Pancreas (tissue), 10 donors: ENCODE measurements at regions of chr1 and their contacts with region 1.

Region 1: DNA sequence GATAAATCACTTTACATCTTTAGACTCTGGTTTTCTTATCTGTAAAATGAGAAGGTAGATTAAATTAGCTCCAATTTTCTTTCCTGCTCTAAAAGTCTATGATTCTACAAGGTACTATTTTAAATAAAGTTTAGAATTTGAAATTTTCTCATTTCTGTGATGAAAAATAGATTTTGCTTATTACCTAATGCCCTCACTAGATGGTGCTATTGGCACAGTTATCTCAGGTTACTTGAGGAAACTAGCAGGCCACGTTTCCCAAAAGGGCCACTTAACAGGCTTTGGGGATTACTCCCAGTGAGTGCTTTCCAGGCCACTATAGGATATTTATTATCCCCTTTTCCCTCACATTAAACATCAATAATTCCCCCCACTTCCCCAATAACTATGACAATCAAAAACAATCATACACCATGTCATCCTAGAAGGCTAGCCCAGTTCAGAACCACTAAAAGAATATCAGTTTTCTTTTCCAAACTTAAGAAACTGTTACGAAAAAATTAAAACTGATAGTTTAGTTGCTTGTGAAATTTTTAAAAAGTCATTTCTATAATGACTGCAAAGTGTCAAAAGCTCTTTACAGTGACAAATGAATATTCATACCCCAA is 30.6 kb downstream of the OMA1 start:
- DNase-seq: peak in 3 of 6 donors; percentile 13 to 37 (median 29)
- ATAC-seq: peak; percentile 56 to 94 (median 91)
- H3K4me3 ChIP-seq: no peak overlapping the region
- H3K27ac ChIP-seq: no peak overlapping the region
- H3K4me1 ChIP-seq: no peaks in the 10 kb centered on the region
- H3K27me3 ChIP-seq: no peaks in the 10 kb centered on the region
- CTCF ChIP-seq: peak in 3 of 4 donors; percentile 25 to 54 (median 43)

Region 2: DNA sequence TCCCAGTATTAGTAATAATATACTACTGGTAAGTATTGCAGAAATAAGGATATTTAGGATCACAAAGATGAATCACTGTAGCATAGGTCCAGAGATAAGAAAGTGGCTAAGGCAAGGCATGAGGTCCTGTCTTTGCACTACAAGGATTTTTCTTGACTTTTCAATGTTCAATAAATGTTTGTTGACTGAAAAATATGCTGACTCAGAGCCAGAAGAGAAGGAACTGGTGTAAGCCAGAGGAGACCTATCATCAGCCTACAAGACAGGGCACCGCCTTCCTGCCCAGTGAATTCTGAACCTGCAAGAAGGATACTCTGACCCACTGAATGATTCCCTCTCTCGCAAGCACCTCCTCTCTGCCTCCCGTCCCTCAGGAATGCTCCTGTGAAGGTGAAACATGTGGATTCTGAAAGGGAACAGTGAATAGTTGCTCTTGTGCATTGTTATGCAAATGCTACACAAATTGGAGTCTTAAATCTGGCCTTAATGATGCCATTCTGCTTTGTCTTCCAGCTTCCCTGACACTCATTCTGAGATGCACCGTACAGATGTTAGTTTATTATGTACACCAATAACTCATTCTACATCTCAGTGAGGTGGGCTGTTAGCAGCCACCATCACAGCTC is 509.4 kb before region 1 on chr1:
- intact Hi-C with region 1: no loop called
- DNase-seq: no peak
- ATAC-seq: no peak
- H3K4me3 ChIP-seq: no peak overlapping the region
- H3K27ac ChIP-seq: no peak overlapping the region
- H3K4me1 ChIP-seq: no peaks in the 10 kb centered on the region
- H3K27me3 ChIP-seq: no peaks in the 10 kb centered on the region
- CTCF ChIP-seq: no peak

Region 3: DNA sequence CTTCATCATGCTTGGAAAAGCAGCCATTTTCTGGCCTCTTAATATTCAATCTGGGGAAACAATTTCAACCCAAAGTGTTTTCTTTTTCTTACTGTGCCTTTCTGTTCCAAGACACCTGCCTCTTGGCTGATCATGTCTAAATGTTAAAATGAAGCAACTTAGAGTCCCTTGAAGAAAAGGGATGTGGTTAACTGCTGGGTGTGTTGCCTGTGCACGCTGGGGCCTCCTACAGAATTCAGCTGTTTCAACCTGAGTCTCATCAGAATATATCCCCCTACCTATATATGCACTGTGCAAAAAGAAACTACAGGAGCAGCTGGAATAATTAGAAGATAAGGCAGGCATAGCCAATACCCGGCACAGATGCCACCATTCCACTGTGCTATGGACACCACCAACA is 191.3 kb before region 1 on chr1:
- intact Hi-C with region 1: no loop called
- DNase-seq: no peak
- ATAC-seq: no peak
- H3K4me3 ChIP-seq: no peak overlapping the region
- H3K27ac ChIP-seq: no peak overlapping the region
- H3K4me1 ChIP-seq: no peaks in the 10 kb centered on the region
- H3K27me3 ChIP-seq: no peaks in the 10 kb centered on the region
- CTCF ChIP-seq: no peak

Region 4: DNA sequence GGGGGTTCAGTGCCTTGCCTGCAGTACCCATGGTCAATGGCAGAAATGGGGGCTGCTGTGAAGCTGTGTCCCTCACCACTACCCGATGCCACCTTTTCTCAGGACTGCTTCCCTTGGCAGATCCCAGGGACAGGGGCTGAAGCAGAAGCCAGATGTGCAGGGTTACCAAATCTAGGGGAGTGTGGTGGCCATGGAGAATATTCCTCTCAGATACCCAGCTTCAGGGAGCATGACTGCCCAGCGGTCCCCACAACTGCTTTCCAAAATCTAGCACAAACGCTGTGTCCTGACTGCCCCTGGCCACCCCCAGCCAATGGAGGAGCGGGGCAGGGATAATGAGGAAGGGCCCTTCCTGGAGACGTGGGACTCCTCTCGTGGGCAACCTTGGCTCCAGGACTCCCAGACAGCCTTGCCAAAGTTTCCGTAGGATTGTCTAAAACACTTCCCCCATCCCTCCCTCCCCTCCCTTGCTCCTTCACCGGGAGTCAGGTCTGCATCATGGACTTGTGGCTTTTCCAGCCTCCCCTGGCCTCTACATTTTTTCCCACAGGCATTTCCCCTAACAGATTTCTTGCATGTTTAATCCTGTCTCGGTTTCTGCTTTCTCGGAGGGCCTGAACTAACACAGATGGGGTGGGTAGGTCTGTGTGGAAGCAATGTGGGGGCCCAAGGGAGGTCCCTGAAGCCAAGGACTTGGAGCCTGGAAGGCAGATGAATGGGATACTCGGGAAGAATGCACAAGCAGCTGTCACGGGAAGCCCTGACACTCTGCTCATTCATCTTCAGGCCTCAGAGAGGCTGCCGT is 49.9 kb before region 1 on chr1:
- intact Hi-C with region 1: no loop called
- DNase-seq: no peak
- ATAC-seq: no peak
- H3K4me3 ChIP-seq: no peak overlapping the region
- H3K27ac ChIP-seq: no peak overlapping the region
- H3K4me1 ChIP-seq: no peaks in the 10 kb centered on the region
- H3K27me3 ChIP-seq: no peaks in the 10 kb centered on the region
- CTCF ChIP-seq: no peak

Region 5: DNA sequence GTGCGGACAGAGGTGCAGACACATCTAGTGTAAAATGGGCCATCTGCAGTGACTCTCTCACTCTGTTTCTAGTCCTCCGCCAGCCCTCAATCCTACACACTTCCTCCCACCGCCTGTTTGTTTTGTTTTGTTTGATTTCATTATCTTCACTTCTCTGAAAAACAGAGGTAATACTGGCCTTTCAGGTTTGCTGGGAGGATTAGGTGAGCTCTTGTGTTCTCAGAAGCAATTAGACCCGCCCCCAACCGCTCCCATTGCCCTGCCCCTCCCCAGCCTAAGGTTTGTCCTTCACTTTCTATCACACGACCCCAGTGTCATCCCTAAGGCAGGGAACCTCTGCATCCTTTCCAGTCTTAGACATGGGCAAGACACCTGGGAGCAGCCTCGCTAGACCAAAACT is 104.4 kb after region 1 on chr1:
- intact Hi-C with region 1: no loop called
- DNase-seq: peak in 5 of 6 donors; percentile 36 to 79 (median 62)
- ATAC-seq: peak; percentile 81 to 89 (median 84)
- H3K4me3 ChIP-seq: no peak overlapping the region
- H3K27ac ChIP-seq: peak overlapping the region; percentile 18 to 81 (median 58)
- H3K4me1 ChIP-seq: peaks cover 16 to 32% (median 20%) of the 10 kb centered on the region in 3 donors
- H3K27me3 ChIP-seq: no peaks in the 10 kb centered on the region
- CTCF ChIP-seq: no peak

Region 6: GRCh38 chr1:58652651-58653184 is 136.8 kb after region 1 on chr1:
- intact Hi-C with region 1: loop called in 2 of 3 experiments (anchors 2 to 5 kb)
- DNase-seq: peak in 4 of 6 donors; percentile 31 to 67 (median 56)
- ATAC-seq: peak; percentile 83 to 99 (median 94)
- H3K4me3 ChIP-seq: no peak overlapping the region
- H3K27ac ChIP-seq: no peak overlapping the region
- H3K4me1 ChIP-seq: peaks cover 0 to 3% (median 0%) of the 10 kb centered on the region in 3 donors
- H3K27me3 ChIP-seq: no peaks in the 10 kb centered on the region
- CTCF ChIP-seq: peak; percentile 72 to 74 (median 74)

Region 7: GRCh38 chr1:58755468-58755872 is 239.6 kb after region 1 on chr1:
- intact Hi-C with region 1: loop called in 1 of 3 experiments (anchors 5 kb)
- DNase-seq: peak in 3 of 6 donors; percentile 7 to 19 (median 16)
- ATAC-seq: peak in 3 of 4 donors; percentile 12 to 74 (median 64)
- H3K4me3 ChIP-seq: no peak overlapping the region
- H3K27ac ChIP-seq: peak overlapping the region in 1 of 4 donors; percentile 13
- H3K4me1 ChIP-seq: peaks cover 7 to 20% (median 10%) of the 10 kb centered on the region in 3 donors
- H3K27me3 ChIP-seq: no peaks in the 10 kb centered on the region
- CTCF ChIP-seq: no peak